Ovary (tissue), 10 donors: ENCODE measurements at regions of chr15 and their contacts with region 1.

Region 1: GRCh38 chr15:75684642-75685041 is 28.0 kb downstream of the CSPG4 start:
- DNase-seq: no peak
- H3K4me3 ChIP-seq: no peak overlapping the region
- H3K27ac ChIP-seq: no peak overlapping the region
- H3K4me1 ChIP-seq: peaks cover 4% of the 10 kb centered on the region
- H3K27me3 ChIP-seq: no peaks in the 10 kb centered on the region
- CTCF ChIP-seq: no peak
- EP300 ChIP-seq: no peak
- POLR2A ChIP-seq: no peak

Region 2: GRCh38 chr15:75606711-75607699 is 77.6 kb before region 1 on chr15:
- intact Hi-C with region 1: loop called in 1 of 4 experiments (anchors 10 kb)
- DNase-seq: no peak
- H3K4me3 ChIP-seq: no peak overlapping the region
- H3K27ac ChIP-seq: no peak overlapping the region
- H3K4me1 ChIP-seq: no peaks in the 10 kb centered on the region
- H3K27me3 ChIP-seq: no peaks in the 10 kb centered on the region
- CTCF ChIP-seq: no peak
- EP300 ChIP-seq: no peak
- POLR2A ChIP-seq: no peak

Region 3: GRCh38 chr15:75647370-75648155 is 37.1 kb before region 1 on chr15 and contains the start of gene SNX33:
- intact Hi-C with region 1: loop called in 1 of 4 experiments (anchors 5 kb)
- DNase-seq: peak; percentile 82 to 89 (median 88)
- H3K4me3 ChIP-seq: peak within 1 kb of the TSS; percentile 81
- H3K27ac ChIP-seq: peak within 1 kb of the TSS; percentile 80 to 96
- H3K4me1 ChIP-seq: peaks cover 38% of the 10 kb centered on the region
- H3K27me3 ChIP-seq: no peaks in the 10 kb centered on the region
- CTCF ChIP-seq: peak in 2 of 3 donors; percentile 47 to 65
- EP300 ChIP-seq: no peak
- POLR2A ChIP-seq: peak; percentile 60
- total RNA-seq, gene SNX33: 16.0 to 37.3 (median 32.3) TPM

Region 4: DNA sequence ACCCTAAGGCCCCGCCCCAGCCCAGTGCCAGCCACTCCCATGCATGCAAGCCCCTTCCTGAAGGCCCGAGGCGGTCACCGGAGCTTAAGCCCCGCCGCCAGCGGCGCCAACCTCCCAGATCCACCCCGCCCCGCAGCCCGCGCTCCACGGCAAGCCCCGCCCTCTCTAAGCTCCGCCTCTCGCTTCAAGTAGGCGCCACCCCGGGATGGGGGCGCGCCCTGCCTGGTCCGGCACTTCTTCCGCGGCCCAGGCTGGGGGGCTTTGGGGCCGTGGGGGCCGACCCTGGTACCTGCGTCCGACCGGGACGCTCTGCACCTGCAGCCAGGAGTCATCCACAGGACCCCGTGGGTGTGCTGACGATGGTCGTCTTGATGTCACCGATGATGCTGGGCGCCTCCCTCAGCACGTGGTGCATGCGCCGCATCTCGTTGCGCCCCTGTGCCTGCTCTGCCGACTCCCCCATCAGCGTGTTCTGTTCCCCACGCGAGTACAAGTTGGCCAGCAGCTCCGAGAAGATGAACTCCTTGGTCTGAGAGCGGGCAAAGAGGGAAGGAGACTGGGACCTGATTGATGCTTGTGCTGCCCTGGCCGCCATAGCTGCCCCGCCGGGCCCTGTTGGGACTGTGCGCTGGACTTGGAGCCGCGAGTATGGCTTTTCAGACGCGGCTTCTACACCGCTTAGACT is 54.1 kb after region 1 on chr15:
- intact Hi-C with region 1: loop called in 3 of 4 experiments (anchors 5 to 10 kb)
- DNase-seq: peak; percentile 96 to 98 (median 96)
- H3K4me3 ChIP-seq: peak overlapping the region; percentile 81
- H3K27ac ChIP-seq: peak overlapping the region in 1 of 2 donors; percentile 49
- H3K4me1 ChIP-seq: peaks cover 10% of the 10 kb centered on the region
- H3K27me3 ChIP-seq: no peaks in the 10 kb centered on the region
- CTCF ChIP-seq: no peak
- EP300 ChIP-seq: no peak
- POLR2A ChIP-seq: no peak